Right lobe of liver (tissue), 6 donors: ENCODE measurements at regions of chr11 and their contacts with region 1.

Region 1: DNA sequence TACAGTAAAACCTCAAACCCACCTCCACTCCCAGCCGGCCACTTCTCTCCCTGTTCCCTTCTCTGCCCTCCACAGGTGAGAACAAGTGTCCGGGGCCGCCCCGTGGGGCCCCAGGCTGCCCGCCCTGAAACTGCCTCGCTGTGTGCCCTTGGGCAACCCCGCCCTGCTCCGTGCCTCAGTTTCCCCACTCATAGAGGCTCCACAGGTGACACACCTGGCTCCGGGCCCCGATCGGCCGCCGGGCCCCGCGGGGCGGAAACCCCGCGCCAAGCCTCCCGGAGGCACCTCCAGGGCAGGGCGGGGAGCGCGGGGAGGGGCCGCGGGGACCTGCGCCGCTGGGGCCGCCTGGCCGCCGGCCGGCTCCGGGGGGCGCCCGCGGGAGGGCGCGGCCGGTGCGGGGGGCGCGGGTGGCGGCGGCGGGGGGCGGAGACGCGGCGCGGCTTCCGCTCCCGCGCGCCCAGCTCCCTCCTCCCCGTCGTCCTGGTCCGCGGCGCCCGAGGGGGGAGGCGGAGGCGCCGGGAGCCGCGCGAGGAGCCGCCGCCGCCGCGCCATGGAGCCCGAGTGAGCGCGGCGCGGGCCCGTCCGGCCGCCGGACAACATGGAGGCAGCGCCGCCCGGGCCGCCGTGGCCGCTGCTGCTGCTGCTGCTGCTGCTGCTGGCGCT is at the start of gene LRP5:
- DNase-seq: peak in 2 of 3 donors; percentile 55 to 58
- ATAC-seq: peak in 3 of 4 donors; percentile 8 to 15 (median 12)
- H3K4me3 ChIP-seq: peak within 1 kb of the TSS; percentile 67 to 75 (median 74)
- H3K27ac ChIP-seq: peak within 1 kb of the TSS; percentile 93 to 95 (median 94)
- H3K4me1 ChIP-seq: peaks cover 0 to 25% (median 14%) of the 10 kb centered on the region in 4 donors
- H3K27me3 ChIP-seq: no peaks in the 10 kb centered on the region
- CTCF ChIP-seq: no peak
- POLR2A ChIP-seq: peak; percentile 56
- total RNA-seq, gene LRP5: 74.4 to 120 (median 88.2) TPM

Region 2: GRCh38 chr11:68118706-68119448 is 193.4 kb before region 1 on chr11:
- intact Hi-C with region 1: no loop called
- DNase-seq: no peak
- ATAC-seq: no peak
- H3K4me3 ChIP-seq: peak overlapping the region; percentile 49 to 85 (median 74)
- H3K27ac ChIP-seq: peak overlapping the region; percentile 75 to 100 (median 84)
- H3K4me1 ChIP-seq: peaks cover 0 to 49% (median 22%) of the 10 kb centered on the region in 4 donors
- H3K27me3 ChIP-seq: no peaks in the 10 kb centered on the region
- CTCF ChIP-seq: no peak
- POLR2A ChIP-seq: no peak

Region 3: GRCh38 chr11:68213555-68214174 is 98.6 kb before region 1 on chr11:
- intact Hi-C with region 1: no loop called
- DNase-seq: peak; percentile 90 to 91 (median 91)
- ATAC-seq: peak; percentile 54 to 78 (median 77)
- H3K4me3 ChIP-seq: peak overlapping the region; percentile 72 to 85 (median 81)
- H3K27ac ChIP-seq: peak overlapping the region; percentile 93 to 99 (median 98)
- H3K4me1 ChIP-seq: peaks cover 0 to 47% (median 13%) of the 10 kb centered on the region in 4 donors
- H3K27me3 ChIP-seq: no peaks in the 10 kb centered on the region
- CTCF ChIP-seq: peak in 1 of 4 donors; percentile 19
- POLR2A ChIP-seq: peak; percentile 96

Region 4: DNA sequence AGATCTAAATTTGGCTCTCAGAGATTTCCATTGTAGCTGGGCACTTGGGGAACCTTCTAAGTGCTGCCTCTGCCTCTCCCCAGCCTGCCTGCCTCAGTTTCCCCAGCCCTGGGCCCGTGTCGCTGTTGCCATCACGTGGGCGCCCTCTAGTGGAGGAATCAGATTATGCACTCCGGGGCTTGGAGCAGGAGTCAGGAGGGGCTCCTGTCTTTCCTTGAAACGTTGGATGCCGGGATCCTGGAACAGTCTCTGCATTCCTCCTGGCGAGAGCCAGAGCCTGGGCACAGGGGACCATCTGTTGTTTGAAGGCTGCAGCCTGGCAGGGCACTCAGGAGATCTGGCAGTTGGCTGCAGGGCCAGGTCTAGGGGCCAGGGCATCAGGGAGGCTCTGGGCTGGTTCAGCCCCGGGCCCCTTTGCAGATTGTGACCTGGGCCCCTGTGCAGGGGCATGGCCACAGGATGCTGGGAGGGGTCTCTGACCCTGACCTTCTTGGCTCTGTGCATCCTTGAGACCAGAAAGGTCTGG is 71.8 kb after region 1 on chr11:
- intact Hi-C with region 1: loop called (anchors 10 kb)
- DNase-seq: peak in 2 of 3 donors; percentile 68 to 70
- ATAC-seq: no peak
- H3K4me3 ChIP-seq: no peak overlapping the region
- H3K27ac ChIP-seq: no peak overlapping the region
- H3K4me1 ChIP-seq: peaks cover 2 to 74% (median 34%) of the 10 kb centered on the region in 4 donors
- H3K27me3 ChIP-seq: no peaks in the 10 kb centered on the region
- CTCF ChIP-seq: peak; percentile 85 to 95 (median 91)
- POLR2A ChIP-seq: no peak